Activated B cell treated with CpG ODN at 0.5 μM for 24 hours (primary cell): ENCODE measurements at regions of chr11 and their contacts with region 1.

Region 1: DNA sequence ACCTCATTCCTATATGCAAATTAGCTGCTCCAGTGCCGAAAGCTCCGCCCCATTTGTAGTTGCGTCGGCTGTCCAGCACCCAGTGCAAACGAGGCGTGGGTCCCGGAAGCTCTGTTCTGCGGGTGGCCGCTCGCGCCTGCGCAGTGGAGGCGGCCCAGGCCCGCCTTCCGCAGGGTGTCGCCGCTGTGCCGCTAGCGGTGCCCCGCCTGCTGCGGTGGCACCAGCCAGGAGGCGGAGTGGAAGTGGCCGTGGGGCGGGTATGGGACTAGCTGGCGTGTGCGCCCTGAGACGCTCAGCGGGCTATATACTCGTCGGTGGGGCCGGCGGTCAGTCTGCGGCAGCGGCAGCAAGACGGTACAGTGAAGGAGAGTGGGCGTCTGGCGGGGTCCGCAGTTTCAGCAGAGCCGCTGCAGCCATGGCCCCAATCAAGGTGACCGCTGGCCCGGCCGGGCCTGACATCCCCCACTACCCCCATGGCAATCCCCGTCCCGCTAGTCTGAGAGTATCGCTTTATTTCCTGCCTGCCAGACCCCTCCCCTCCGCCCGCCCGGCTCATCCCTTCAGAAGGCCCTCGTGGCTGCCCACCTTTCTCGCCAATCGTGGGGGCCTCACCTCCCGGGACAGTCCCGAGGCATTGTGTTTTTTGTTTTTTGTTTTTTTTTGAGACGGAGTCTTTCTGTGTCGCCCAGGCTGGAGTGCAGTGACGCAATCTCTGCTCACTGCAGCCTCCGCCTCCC is at the start of gene PRDX5:
- DNase-seq: peak; percentile 91
- ATAC-seq: peak; percentile 81
- H3K4me3 Mint-ChIP-seq: peak within 1 kb of the TSS; percentile 94
- H3K27ac Mint-ChIP-seq: peak within 1 kb of the TSS; percentile 99
- H3K4me1 Mint-ChIP-seq: peaks cover 24% of the 10 kb centered on the region
- H3K27me3 Mint-ChIP-seq: no peaks in the 10 kb centered on the region
- CTCF ChIP-seq: no peak
- total RNA-seq, gene PRDX5: 73.6 and 85.8 TPM in 2 replicates

Region 2: DNA sequence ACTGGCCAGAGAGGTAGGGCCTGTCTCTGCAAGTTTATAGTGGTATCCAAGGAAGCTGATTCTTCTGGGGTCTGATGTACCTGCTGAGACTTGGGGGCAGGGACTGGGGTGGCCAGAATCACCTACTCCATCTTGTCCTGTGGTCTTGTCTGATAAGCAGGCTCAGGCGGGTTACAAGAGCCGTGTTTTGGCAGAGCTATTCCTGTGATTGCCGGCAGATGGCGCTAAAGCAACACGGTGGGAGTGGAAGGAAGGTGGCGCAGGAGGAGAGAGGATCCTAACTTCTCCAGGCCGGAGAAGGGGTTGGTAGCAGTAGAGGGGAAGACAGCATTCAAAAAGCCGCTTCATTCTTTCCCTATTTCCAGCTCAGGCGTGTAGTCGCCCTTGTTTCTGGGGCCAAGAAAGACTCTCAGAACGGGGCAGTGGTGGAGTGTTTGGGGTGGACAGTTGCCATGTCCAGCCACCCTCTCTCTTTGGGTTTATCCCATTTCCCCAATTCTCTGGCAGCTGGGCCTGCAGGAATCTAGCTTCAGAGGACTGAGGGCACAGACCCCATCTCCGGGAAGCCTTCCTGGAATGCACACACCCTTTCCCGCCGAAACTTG is 1412.1 kb before region 1 on chr11:
- CTCF ChIA-PET with region 1: no interaction called
- POLR2A ChIA-PET with region 1: no interaction called
- intact Hi-C with region 1: no loop called
- DNase-seq: peak; percentile 63
- ATAC-seq: peak; percentile 69
- H3K4me3 Mint-ChIP-seq: no peak overlapping the region
- H3K27ac Mint-ChIP-seq: no peak overlapping the region
- H3K4me1 Mint-ChIP-seq: no peaks in the 10 kb centered on the region
- H3K27me3 Mint-ChIP-seq: peaks cover 25% of the 10 kb centered on the region
- CTCF ChIP-seq: peak; percentile 91

Region 3: GRCh38 chr11:63938479-63939396 is 379.4 kb before region 1 on chr11 and contains the start of gene NAA40:
- CTCF ChIA-PET with region 1: no interaction called
- POLR2A ChIA-PET with region 1: interaction called, 3 read pairs
- intact Hi-C with region 1: loop called (anchors 5 kb)
- DNase-seq: peak; percentile 94
- ATAC-seq: peak; percentile 91
- H3K4me3 Mint-ChIP-seq: peak within 1 kb of the TSS; percentile 90
- H3K27ac Mint-ChIP-seq: peak within 1 kb of the TSS; percentile 82
- H3K4me1 Mint-ChIP-seq: peaks cover 36% of the 10 kb centered on the region
- H3K27me3 Mint-ChIP-seq: no peaks in the 10 kb centered on the region
- CTCF ChIP-seq: no peak
- total RNA-seq, gene NAA40: 28.0 and 28.6 TPM in 2 replicates

Region 4: DNA sequence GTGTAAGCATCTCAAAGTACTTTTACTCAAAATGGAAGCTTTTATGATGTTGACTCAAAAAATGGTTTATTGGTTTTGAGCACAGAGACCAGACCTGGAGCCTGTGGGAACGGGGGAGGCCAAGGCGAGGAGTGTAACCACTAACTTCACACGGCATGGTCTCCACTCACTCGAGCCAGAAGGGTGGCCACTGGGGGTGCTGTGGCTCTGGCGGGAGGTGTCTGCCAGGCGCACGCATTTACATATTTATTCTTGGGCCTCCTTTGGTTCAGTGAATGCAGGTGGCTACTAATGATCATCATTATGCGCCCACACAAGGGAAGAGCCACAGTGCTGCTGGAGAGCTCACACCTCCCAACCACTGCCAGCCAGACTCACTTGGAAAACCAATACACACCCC is 217.8 kb before region 1 on chr11:
- CTCF ChIA-PET with region 1: no interaction called
- POLR2A ChIA-PET with region 1: no interaction called
- intact Hi-C with region 1: no loop called
- DNase-seq: no peak
- ATAC-seq: no peak
- H3K4me3 Mint-ChIP-seq: no peak overlapping the region
- H3K27ac Mint-ChIP-seq: no peak overlapping the region
- H3K4me1 Mint-ChIP-seq: no peaks in the 10 kb centered on the region
- H3K27me3 Mint-ChIP-seq: no peaks in the 10 kb centered on the region
- CTCF ChIP-seq: no peak

Region 5: DNA sequence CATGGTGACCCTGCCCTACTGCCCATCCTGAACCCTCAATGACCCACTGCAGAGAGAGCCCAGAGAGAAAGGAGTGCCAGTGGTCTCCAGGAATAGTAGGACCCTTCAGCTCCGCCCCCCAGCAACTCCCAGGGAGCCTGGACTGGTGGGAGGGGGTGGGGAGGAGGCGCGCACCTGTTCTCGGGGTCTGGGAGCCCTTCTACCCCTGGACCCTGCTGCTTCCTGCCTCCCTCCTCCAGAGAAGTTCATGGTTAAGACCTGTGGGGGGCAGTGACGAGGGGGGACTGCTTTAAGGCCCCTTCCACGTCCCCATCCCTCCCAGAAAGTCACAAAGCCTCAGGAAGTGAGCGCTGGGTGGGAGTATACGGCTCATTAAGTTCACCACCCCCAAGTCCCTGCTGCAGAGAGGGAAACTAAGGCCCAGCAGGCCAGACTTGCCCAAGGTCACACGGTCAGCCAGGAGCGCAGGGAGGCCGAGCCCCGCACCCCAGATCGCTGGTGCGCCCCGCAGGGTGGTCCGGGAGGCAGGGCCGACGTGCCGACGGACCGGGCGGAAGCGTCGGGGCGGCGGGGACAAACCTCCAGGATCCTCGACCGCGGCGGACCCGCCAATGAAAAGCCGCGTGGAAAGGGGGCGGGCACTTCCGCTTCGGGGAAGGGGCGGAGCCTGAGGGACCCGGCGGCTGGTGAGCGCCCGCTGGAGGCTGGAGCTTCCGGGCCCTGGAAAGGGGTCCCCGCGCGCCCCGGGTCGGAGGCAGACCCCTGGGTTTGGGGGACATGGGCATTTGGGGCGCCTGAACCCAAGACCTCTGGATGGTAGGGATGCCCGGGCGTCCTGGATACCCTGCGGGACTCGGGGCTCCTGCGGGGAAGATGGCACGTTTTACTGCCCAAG is 92.3 kb before region 1 on chr11 and contains the starts of genes NUDT22 and TRPT1:
- CTCF ChIA-PET with region 1: no interaction called
- POLR2A ChIA-PET with region 1: interaction called, 12 read pairs
- intact Hi-C with region 1: loop called (anchors 5 kb)
- DNase-seq: peak; percentile 95
- ATAC-seq: peak; percentile 56
- H3K4me3 Mint-ChIP-seq: peak within 1 kb of the TSS; percentile 87
- H3K27ac Mint-ChIP-seq: peak within 1 kb of the TSS; percentile 81
- H3K4me1 Mint-ChIP-seq: peaks cover 39% of the 10 kb centered on the region
- H3K27me3 Mint-ChIP-seq: no peaks in the 10 kb centered on the region
- CTCF ChIP-seq: no peak
- total RNA-seq, gene NUDT22: 81.0 and 95.3 TPM in 2 replicates
- total RNA-seq, gene TRPT1: 50.6 and 51.3 TPM in 2 replicates

Region 6: GRCh38 chr11:64284048-64284961 is 33.8 kb before region 1 on chr11 and contains the start of gene BAD:
- CTCF ChIA-PET with region 1: interaction called, 4 read pairs
- POLR2A ChIA-PET with region 1: interaction called, 14 read pairs
- intact Hi-C with region 1: loop called (anchors 1 kb)
- DNase-seq: peak; percentile 80
- ATAC-seq: peak; percentile 79
- H3K4me3 Mint-ChIP-seq: peak within 1 kb of the TSS; percentile 90
- H3K27ac Mint-ChIP-seq: peak within 1 kb of the TSS; percentile 92
- H3K4me1 Mint-ChIP-seq: peaks cover 20% of the 10 kb centered on the region
- H3K27me3 Mint-ChIP-seq: no peaks in the 10 kb centered on the region
- CTCF ChIP-seq: no peak
- total RNA-seq, gene BAD: 21.7 and 26.6 TPM in 2 replicates

Region 7: DNA sequence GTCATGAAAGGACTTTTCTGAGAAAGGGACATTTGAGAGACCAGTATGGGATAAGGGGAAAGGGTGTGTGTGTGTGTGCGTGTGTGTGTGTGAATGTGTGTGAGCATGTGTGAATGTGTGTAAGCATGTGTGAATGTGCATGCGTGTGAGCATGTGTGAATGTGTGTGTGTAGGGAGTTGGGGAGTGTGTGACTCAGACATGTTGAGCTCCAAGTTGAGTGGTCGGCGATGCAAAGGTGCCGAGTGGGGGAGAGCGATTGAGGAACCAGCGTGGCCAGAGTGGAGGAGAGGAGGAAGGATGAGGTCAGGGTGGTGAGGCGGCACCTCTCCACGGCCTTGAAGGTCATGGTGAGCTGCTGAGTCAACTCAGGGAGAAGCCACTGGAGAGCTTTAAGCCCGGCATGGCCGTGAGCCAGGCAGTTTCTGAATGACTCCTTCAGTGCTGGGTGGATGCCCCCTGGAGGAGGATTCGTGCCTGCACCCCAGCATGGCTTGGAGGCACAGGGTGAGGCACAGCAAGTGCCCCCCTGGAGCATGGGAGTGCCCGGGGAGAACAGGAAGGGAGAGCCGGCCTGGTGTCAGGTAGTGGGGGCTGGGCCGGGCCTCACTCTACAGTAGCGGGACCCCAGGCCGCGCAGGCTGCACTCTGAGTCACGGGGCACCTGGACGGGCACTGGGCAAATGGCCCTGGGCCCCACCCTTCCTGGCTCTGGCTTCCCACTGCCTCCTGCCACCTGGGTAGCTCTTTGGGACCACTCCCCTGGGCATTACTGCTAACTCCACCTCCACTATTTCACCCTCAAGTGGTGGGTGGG is 13.6 kb after region 1 on chr11:
- CTCF ChIA-PET with region 1: interaction called, 56 read pairs
- POLR2A ChIA-PET with region 1: interaction called, 77 read pairs
- intact Hi-C with region 1: loop called (anchors 1 kb)
- DNase-seq: peak; percentile 52
- ATAC-seq: peak; percentile 32
- H3K4me3 Mint-ChIP-seq: peak overlapping the region; percentile 2
- H3K27ac Mint-ChIP-seq: peak overlapping the region; percentile 5
- H3K4me1 Mint-ChIP-seq: peaks cover 35% of the 10 kb centered on the region
- H3K27me3 Mint-ChIP-seq: no peaks in the 10 kb centered on the region
- CTCF ChIP-seq: no peak

Region 8: DNA sequence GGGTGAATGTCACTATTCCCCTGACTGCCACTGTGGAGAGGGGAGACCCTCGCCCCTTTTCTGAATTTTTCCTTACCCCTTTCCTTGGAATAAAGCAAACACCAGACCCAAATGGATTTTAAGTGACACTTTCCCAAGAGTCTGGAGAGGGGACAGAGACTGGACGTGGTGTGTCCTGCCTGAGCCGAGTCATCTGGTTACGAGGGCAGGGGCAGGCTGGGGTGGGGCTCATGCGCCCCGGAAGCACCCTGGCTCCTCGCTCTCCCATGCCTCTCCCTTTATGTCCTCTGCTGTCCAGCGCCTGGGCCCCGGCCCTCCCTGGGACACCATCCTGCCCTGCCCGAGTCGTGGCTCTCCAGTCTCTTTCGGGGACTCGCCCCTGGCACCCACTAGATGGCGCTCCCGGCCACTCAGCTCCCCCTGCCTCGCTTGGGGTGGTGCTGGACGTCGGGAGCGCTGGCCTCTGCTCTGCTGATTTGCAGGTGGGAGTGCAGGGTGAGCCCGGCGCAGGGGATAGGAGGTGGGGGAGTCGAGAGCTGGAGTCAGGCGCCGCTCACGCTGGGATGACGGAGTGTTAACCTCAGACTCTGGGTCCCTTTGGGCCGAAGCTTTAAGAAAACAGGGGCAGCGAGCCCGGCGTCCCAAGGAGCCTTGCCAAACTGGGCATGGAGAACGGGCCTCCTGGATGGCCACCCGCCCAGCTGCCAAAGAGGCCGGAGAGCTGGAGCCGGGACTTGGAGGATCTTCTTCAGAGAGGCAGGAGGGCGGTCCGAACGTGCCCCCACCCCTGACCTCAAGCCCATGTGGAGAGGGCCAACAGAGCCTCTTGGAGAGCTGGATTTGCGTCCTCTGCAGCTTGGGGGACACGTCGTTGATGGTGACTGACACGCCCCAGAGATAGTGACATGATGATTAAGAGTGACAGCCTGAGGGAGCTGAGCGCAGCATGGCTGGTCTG is 130.8 kb after region 1 on chr11:
- CTCF ChIA-PET with region 1: interaction called, 11 read pairs
- POLR2A ChIA-PET with region 1: interaction called, 13 read pairs
- intact Hi-C with region 1: loop called (anchors 1 kb)
- DNase-seq: peak; percentile 71
- ATAC-seq: peak; percentile 59
- H3K4me3 Mint-ChIP-seq: peak overlapping the region; percentile 87
- H3K27ac Mint-ChIP-seq: peak overlapping the region; percentile 73
- H3K4me1 Mint-ChIP-seq: peaks cover 35% of the 10 kb centered on the region
- H3K27me3 Mint-ChIP-seq: peaks cover 2% of the 10 kb centered on the region
- CTCF ChIP-seq: no peak

Region 9: DNA sequence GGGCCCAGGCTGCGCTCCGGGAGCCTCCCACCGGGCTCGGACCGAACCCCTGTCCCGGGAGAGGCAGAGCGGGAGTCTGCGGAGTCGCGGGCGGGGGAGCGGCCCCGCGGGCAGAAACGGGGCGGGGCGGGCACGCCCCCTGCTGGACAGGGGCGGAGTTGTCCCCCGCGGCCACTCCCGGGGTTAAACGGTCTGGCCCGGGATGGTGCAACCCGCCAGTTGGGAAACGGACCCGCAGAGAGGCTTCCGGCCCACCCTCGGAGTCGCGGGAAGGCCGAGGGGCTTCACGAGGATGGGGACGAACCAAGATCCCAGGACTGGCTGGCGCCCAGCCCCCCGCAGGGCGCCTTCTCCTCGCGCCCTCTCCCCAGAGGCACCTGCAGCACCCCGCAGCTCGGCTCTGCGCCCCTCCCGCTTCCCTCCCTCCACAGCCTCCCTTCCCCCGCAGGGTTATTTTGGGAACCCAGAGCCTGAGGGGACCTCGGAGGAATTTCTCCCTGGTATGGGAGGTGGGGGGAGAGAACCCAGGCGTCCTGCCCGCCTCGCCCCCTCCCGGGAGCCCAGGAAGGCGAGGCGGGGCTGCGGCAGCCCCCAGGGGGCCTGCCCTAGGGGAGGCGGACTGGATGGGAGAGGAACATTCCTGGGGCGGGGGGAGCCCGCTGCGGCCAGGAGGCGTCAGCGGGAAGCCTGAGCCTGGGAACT is 424.9 kb after region 1 on chr11:
- CTCF ChIA-PET with region 1: no interaction called
- POLR2A ChIA-PET with region 1: interaction called, 16 read pairs
- intact Hi-C with region 1: loop called (anchors 5 kb)
- DNase-seq: peak; percentile 89
- ATAC-seq: peak; percentile 12
- H3K4me3 Mint-ChIP-seq: peak overlapping the region; percentile 96
- H3K27ac Mint-ChIP-seq: no peak overlapping the region
- H3K4me1 Mint-ChIP-seq: peaks cover 43% of the 10 kb centered on the region
- H3K27me3 Mint-ChIP-seq: no peaks in the 10 kb centered on the region
- CTCF ChIP-seq: peak; percentile 85